ENCODE measurements at regions of chrX and their contacts with region 1.

Region 1: GRCh38 chrX:119067023-119067739 is 5.6 kb upstream of the CT47C1 start:
- DNase-seq: peak in 2 of 4 donors; percentile 19 to 55
- ATAC-seq: peak; percentile 93
- H3K4me3 ChIP-seq: no peak overlapping the region
- H3K27ac ChIP-seq: no peak overlapping the region
- H3K4me1 ChIP-seq: no peaks in the 10 kb centered on the region
- H3K27me3 ChIP-seq: peaks cover 0 to 2% of the 10 kb centered on the region in 2 donors
- CTCF ChIP-seq: peak; percentile 39 to 72

Region 2: GRCh38 chrX:118847676-118848075 is 219.5 kb before region 1 on chrX:
- intact Hi-C with region 1: loop called in 1 of 2 experiments (anchors 5 kb)
- DNase-seq: peak in 2 of 4 donors; percentile 54 to 60
- ATAC-seq: peak; percentile 87
- H3K4me3 ChIP-seq: no peak overlapping the region
- H3K27ac ChIP-seq: no peak overlapping the region
- H3K4me1 ChIP-seq: no peaks in the 10 kb centered on the region
- H3K27me3 ChIP-seq: no peaks in the 10 kb centered on the region
- CTCF ChIP-seq: peak; percentile 53 to 63

Region 3: GRCh38 chrX:118948270-118948669 is 118.9 kb before region 1 on chrX:
- intact Hi-C with region 1: no loop called
- DNase-seq: no peak
- ATAC-seq: no peak
- H3K4me3 ChIP-seq: no peak overlapping the region
- H3K27ac ChIP-seq: no peak overlapping the region
- H3K4me1 ChIP-seq: no peaks in the 10 kb centered on the region
- H3K27me3 ChIP-seq: no peaks in the 10 kb centered on the region
- CTCF ChIP-seq: no peak